ENCODE measurements at regions of chr3 and their contacts with region 1.

Region 1: DNA sequence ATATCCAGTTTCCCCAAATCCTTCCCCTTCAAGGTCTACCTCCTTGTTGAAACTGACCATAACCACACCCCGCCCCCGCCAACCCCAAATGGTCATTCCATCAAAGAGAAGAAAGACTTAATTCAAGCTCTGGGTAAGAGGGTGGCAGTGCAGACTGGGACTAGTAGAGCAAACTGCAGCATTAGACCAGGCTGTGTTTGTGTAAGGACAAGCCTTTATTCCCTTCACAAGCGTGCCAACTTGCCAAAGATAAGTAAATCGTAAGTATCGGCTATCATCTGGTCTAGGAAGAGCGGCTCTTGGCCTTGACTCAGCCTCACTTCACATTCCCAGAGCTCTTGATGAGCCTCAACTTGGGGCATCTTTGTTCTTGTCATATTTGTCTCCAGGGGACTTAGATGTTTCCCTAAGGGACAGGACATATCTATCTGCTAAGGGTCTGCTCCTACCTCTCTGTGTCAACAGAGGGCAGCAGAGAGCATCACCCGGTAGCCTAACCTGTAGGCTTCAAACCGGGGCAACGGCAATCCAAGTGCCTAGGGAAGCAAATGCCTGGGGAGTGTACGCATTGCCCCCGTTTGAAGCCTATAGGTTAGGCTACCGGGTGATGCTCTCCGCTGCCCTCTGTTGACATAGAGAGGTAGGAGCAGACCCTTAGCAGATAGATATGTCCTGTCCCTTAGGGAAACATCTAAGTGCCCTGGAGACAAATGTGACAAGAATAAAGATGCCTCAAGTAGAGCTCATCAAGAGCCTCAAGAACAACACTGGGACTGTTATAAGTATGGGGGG is 8.9 kb upstream of the MAP3K13 start:
- DNase-seq: peak; percentile 89 to 91
- H3K4me3 ChIP-seq: no peak overlapping the region
- H3K4me3 Mint-ChIP-seq: no peak overlapping the region
- H3K27ac Mint-ChIP-seq: no peak overlapping the region
- H3K4me1 ChIP-seq: no peaks in the 10 kb centered on the region
- H3K4me1 Mint-ChIP-seq: no peaks in the 10 kb centered on the region
- H3K27me3 ChIP-seq: no peaks in the 10 kb centered on the region
- H3K27me3 Mint-ChIP-seq: no peaks in the 10 kb centered on the region
- CTCF ChIP-seq: peak; percentile 67 to 81

Region 2: GRCh38 chr3:185552358-185552877 is 198.4 kb after region 1 on chr3 and contains the start of gene LIPH:
- CTCF ChIA-PET with region 1: no interaction called
- POLR2A ChIA-PET with region 1: no interaction called
- intact Hi-C with region 1: loop called (anchors 10 kb)
- DNase-seq: peak in 1 of 2 experiments; percentile 49
- H3K4me3 ChIP-seq: peak within 1 kb of the TSS; percentile 25
- H3K4me3 Mint-ChIP-seq: peak within 1 kb of the TSS; percentile 72
- H3K27ac Mint-ChIP-seq: peak within 1 kb of the TSS; percentile 60
- H3K4me1 ChIP-seq: peaks cover 40% of the 10 kb centered on the region
- H3K4me1 Mint-ChIP-seq: no peaks in the 10 kb centered on the region
- H3K27me3 ChIP-seq: no peaks in the 10 kb centered on the region
- H3K27me3 Mint-ChIP-seq: no peaks in the 10 kb centered on the region
- CTCF ChIP-seq: no peak
- total RNA-seq, gene LIPH: 5.8 and 6.1 TPM in 2 replicates

Measured in Caco-2 (cell line).